ENCODE measurements at regions of chr6 and their contacts with region 1.

Region 1: GRCh38 chr6:134174672-134175198 is 122.3 kb upstream of the SLC2A12 start:
- DNase-seq: peak; percentile 99
- H3K4me3 ChIP-seq: peak overlapping the region; percentile 74 to 85 (median 80)
- H3K27ac ChIP-seq: peak overlapping the region; percentile 92 to 97 (median 96)
- H3K4me1 ChIP-seq: peaks cover 29 to 90% (median 77%) of the 10 kb centered on the region in 6 donors
- H3K27me3 ChIP-seq: peaks cover 0 to 13% (median 0%) of the 10 kb centered on the region in 7 donors
- CTCF ChIP-seq: peak in 6 of 11 experiments; percentile 14 to 47 (median 26)
- POLR2A ChIP-seq: peak; percentile 10 to 96 (median 62)

Region 2: GRCh38 chr6:133837801-133838349 is 336.9 kb before region 1 on chr6:
- intact Hi-C with region 1: no loop called
- DNase-seq: peak; percentile 80
- H3K4me3 ChIP-seq: peak overlapping the region in 6 of 8 donors; percentile 15 to 63 (median 30)
- H3K27ac ChIP-seq: no peak overlapping the region
- H3K4me1 ChIP-seq: peaks cover 0 to 7% (median 5%) of the 10 kb centered on the region in 6 donors
- H3K27me3 ChIP-seq: peaks cover 0 to 24% (median 4%) of the 10 kb centered on the region in 7 donors
- CTCF ChIP-seq: peak in 9 of 11 experiments; percentile 35 to 79 (median 69)
- POLR2A ChIP-seq: no peak

Region 3: GRCh38 chr6:134111062-134111677 is 63.6 kb before region 1 on chr6:
- intact Hi-C with region 1: no loop called
- DNase-seq: no peak
- H3K4me3 ChIP-seq: no peak overlapping the region
- H3K27ac ChIP-seq: no peak overlapping the region
- H3K4me1 ChIP-seq: no peaks in the 10 kb centered on the region
- H3K27me3 ChIP-seq: peaks cover 0 to 20% (median 0%) of the 10 kb centered on the region in 7 donors
- CTCF ChIP-seq: peak; percentile 9 to 78 (median 56)
- POLR2A ChIP-seq: no peak

Region 4: GRCh38 chr6:134247231-134247833 is 72.6 kb after region 1 on chr6:
- intact Hi-C with region 1: loop called (anchors 10 kb)
- DNase-seq: peak; percentile 76
- H3K4me3 ChIP-seq: peak overlapping the region in 1 of 8 donors; percentile 24
- H3K27ac ChIP-seq: peak overlapping the region in 7 of 8 donors; percentile 49 to 78 (median 58)
- H3K4me1 ChIP-seq: peaks cover 21 to 60% (median 48%) of the 10 kb centered on the region in 6 donors
- H3K27me3 ChIP-seq: no peaks in the 10 kb centered on the region
- CTCF ChIP-seq: no peak
- POLR2A ChIP-seq: no peak

Region 5: GRCh38 chr6:134640975-134641429 is 466.3 kb after region 1 on chr6:
- intact Hi-C with region 1: loop called (anchors 5 kb)
- DNase-seq: peak; percentile 83
- H3K4me3 ChIP-seq: no peak overlapping the region
- H3K27ac ChIP-seq: peak overlapping the region in 2 of 8 donors; percentile 8 to 24
- H3K4me1 ChIP-seq: peaks cover 0 to 26% (median 0%) of the 10 kb centered on the region in 6 donors
- H3K27me3 ChIP-seq: no peaks in the 10 kb centered on the region
- CTCF ChIP-seq: peak; percentile 92 to 99 (median 97)
- POLR2A ChIP-seq: no peak

Region 6: DNA sequence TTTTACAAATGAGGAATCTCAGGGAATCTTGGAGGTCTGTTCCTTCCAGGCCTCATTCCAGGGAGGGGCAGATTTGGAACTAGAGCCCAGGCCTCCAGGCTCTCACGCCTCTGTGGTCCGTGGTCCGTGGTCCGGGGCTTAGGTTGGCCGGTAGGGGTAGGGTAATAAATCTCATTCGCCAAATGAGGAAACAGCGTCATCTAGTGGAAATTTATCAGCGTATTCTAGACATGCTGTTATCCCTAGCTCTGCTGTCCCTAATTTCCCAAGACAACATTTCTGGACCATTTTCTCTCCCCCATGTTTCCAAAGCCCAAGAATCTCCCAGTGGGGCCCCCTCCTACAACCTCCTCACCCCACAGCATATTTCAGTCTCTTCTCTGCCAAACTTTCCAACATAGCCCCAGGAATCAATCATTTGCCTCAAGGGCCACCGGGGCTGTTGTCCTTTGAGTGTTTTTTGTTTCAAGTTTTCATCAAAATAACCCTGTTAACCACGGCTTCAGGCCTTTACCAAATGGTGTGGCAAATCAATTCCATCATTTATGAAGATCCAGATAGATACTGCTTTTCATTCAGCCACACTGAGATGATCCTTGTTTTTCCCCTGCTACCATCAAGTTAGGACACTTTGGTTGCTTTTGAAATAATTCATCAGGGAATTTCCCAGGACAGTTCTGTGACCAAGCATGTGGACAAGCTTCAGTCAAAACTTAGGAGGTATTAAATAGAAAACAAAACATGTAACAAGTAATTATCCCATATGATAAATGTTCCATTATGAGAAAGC is 648.4 kb after region 1 on chr6:
- intact Hi-C with region 1: loop called (anchors 5 kb)
- DNase-seq: no peak
- H3K4me3 ChIP-seq: no peak overlapping the region
- H3K27ac ChIP-seq: no peak overlapping the region
- H3K4me1 ChIP-seq: peaks cover 0 to 4% (median 0%) of the 10 kb centered on the region in 6 donors
- H3K27me3 ChIP-seq: no peaks in the 10 kb centered on the region
- CTCF ChIP-seq: peak; percentile 49 to 95 (median 74)
- POLR2A ChIP-seq: no peak

Measured in spleen (tissue), 13 donors.